Natural killer cell (primary cell): ENCODE measurements at regions of chr2 and their contacts with region 1.

Region 1: GRCh38 chr2:103161456-103162289 is 399.8 kb downstream of the TMEM182 start:
- DNase-seq: no peak
- ATAC-seq: peak in 1 of 3 donors; percentile 53
- H3K4me3 ChIP-seq: no peak overlapping the region
- H3K4me3 Mint-ChIP-seq: no peak overlapping the region
- H3K27ac ChIP-seq: no peak overlapping the region
- H3K27ac Mint-ChIP-seq: no peak overlapping the region
- H3K4me1 ChIP-seq: no peaks in the 10 kb centered on the region
- H3K4me1 Mint-ChIP-seq: peaks cover 0 to 6% of the 10 kb centered on the region in 2 donors
- H3K27me3 ChIP-seq: no peaks in the 10 kb centered on the region
- H3K27me3 Mint-ChIP-seq: peaks cover 0 to 14% of the 10 kb centered on the region in 2 donors
- CTCF ChIP-seq: peak; percentile 55

Region 2: DNA sequence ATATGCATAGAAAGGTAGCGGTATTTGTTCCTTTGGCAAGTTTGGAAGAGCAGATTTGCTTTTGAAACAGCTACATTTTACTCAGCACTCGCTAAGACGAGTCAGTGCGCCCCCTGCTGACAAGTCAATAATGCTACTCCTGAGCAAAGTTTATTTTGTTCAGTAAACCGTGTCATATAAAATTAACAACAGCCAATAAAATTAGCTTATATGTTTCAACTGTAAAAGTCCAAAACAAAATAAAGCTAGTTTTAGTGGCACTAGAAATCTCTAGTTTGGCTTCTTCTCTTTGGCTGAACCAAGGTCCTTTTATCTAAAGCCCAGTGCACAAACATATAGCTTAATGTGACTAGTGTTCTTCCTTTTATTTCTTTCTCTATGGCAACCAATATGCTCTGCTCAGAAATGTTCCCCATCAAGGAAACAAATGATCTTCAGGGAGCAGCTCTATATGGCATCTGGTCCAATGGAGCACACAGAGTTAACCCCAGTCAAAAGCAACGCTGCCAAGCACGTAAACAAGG is 1688.0 kb after region 1 on chr2:
- intact Hi-C with region 1: loop called (anchors 5 kb)
- DNase-seq: peak; percentile 40 to 69
- ATAC-seq: peak in 2 of 3 donors; percentile 46 to 56
- H3K4me3 ChIP-seq: no peak overlapping the region
- H3K4me3 Mint-ChIP-seq: no peak overlapping the region
- H3K27ac ChIP-seq: no peak overlapping the region
- H3K27ac Mint-ChIP-seq: no peak overlapping the region
- H3K4me1 ChIP-seq: peaks cover 27% of the 10 kb centered on the region
- H3K4me1 Mint-ChIP-seq: peaks cover 43 to 46% of the 10 kb centered on the region in 2 donors
- H3K27me3 ChIP-seq: peaks cover 69% of the 10 kb centered on the region
- H3K27me3 Mint-ChIP-seq: peaks cover 84 to 88% of the 10 kb centered on the region in 2 donors
- CTCF ChIP-seq: peak; percentile 70